ENCODE measurements at regions of chr2 and their contacts with region 1.

Region 1: DNA sequence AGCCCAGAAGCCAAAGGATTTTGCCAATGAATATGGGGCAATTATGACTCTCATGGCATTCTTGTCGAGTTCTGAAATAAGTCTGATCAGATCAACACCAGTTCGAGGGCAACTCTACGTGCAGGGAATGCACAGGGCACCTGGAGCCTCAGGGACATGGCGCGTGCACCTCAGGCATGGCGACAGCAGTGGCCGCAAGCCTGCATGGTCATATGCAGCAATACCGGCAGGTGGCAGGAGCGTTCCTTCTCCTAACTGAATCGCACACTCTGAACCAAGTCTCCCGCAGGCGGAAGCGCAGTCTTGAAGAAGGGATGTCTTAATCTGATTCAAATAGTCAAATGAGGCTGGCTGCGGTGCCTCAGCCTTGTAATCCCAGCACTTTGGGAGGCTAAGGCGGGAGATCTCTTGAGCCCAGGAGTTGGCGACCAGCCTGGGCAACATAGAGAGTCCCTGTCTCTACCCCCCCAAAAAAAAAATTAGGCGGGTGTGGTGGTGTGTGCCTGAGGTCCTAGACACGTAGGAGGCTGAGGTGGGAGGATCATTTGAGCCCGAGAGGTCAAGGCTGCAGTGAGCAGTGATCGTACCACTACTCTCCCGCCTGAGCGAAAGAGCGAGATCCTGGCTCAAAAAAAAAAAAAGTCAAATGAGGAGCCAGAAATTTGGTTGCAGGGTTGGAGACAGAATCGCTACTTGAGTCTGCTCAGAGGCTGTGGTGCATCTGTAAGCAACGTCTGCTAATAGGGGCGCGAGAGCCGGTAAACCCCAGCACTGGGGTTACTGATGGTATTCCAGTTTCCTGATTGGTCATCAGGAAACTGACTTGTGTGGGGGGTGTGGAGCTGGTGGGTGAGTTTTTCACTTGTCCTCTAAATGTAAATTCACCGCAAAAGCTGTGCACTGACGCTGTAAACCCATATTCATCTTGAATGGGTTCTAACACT is 28.8 kb downstream of the FHL2 start:
- DNase-seq: no peak
- H3K4me3 ChIP-seq: no peak overlapping the region
- H3K27me3 ChIP-seq: no peaks in the 10 kb centered on the region
- CTCF ChIP-seq: peak; percentile 88

Region 2: DNA sequence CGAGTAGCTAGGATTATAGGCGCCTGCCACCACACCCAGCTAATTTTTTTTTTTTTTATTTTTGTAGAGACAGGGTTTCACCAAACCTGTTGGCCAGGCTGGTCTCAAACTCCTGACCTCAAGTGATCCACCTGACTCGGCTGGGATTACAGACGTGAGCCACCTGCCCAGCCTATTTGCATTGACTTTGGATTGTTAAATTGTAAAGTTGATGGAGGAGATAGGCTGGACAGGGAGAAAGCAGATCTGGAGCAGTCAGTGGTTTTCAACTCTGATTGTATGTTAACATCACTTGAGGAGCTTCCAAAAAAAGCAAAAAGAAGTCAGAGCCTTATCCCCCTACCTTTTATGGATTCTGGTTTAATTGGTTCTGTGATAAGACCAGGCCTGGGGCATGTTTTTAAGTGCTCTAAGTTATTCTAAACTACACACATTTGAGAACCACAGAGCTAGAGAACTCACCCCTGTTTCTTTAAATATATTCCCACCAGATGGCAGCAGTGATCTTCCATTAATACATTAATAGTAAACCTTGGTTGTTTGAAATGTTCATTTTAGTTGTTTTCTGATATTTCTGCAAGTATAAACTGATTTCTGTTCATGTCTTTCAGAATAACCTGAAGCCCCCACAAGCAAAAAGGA is 25.2 kb before region 1 on chr2:
- CTCF ChIA-PET with region 1: interaction called, 10 read pairs
- POLR2A ChIA-PET with region 1: no interaction called
- DNase-seq: no peak
- H3K4me3 ChIP-seq: no peak overlapping the region
- H3K27me3 ChIP-seq: no peaks in the 10 kb centered on the region
- CTCF ChIP-seq: peak; percentile 41